Activated B cell treated with CpG ODN at 0.5 μM for 24 hours (primary cell): ENCODE measurements at regions of chr19 and their contacts with region 1.

Region 1: GRCh38 chr19:9621156-9622037 is at the start of gene ZNF561:
- DNase-seq: peak; percentile 81
- ATAC-seq: peak; percentile 88
- H3K4me3 Mint-ChIP-seq: peak within 1 kb of the TSS; percentile 96
- H3K27ac Mint-ChIP-seq: peak within 1 kb of the TSS; percentile 98
- H3K4me1 Mint-ChIP-seq: peaks cover 20% of the 10 kb centered on the region
- H3K27me3 Mint-ChIP-seq: peaks cover 3% of the 10 kb centered on the region
- CTCF ChIP-seq: no peak
- total RNA-seq, gene ZNF561: 37.1 and 40.2 TPM in 2 replicates

Region 2: GRCh38 chr19:8846819-8847218 is 774.6 kb before region 1 on chr19:
- CTCF ChIA-PET with region 1: no interaction called
- POLR2A ChIA-PET with region 1: no interaction called
- intact Hi-C with region 1: no loop called
- DNase-seq: no peak
- ATAC-seq: no peak
- H3K4me3 Mint-ChIP-seq: no peak overlapping the region
- H3K27ac Mint-ChIP-seq: no peak overlapping the region
- H3K4me1 Mint-ChIP-seq: no peaks in the 10 kb centered on the region
- H3K27me3 Mint-ChIP-seq: peaks cover 7% of the 10 kb centered on the region
- CTCF ChIP-seq: no peak

Region 3: GRCh38 chr19:9309139-9309973 is 312.0 kb before region 1 on chr19 and contains the start of gene ZNF699:
- CTCF ChIA-PET with region 1: no interaction called
- POLR2A ChIA-PET with region 1: no interaction called
- intact Hi-C with region 1: loop called (anchors 1 kb)
- DNase-seq: peak; percentile 94
- ATAC-seq: peak; percentile 88
- H3K4me3 Mint-ChIP-seq: peak within 1 kb of the TSS; percentile 96
- H3K27ac Mint-ChIP-seq: peak within 1 kb of the TSS; percentile 98
- H3K4me1 Mint-ChIP-seq: peaks cover 24% of the 10 kb centered on the region
- H3K27me3 Mint-ChIP-seq: no peaks in the 10 kb centered on the region
- CTCF ChIP-seq: no peak
- total RNA-seq, gene ZNF699: 10.3 and 11.7 TPM in 2 replicates

Region 4: DNA sequence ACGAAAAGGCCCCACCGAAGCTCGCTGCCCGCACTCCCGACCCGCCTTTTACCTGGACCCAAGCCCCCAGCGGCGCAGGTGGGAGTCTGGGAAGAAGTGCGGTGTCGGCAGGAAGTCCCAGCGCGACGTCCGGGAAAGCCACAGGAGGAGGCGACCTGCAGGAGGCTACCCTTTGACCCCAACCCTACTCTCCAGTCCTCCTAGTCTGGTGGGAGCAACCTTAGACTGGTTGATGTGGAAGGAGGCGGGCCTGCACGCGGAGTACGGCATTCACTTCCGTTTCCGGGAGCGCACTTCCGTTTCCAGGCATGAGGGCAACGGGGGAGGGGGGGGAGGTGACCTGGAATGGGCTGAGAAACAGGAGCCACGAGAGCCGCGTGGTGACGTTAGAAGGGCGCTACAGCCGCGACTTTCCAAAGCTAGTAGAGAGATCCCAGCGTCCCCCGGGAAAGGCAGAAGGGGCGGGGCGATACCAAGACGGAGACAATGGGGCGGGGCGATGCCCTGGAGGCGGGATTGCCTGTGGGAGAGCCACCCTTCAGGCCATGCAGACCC is 214.5 kb before region 1 on chr19:
- CTCF ChIA-PET with region 1: no interaction called
- POLR2A ChIA-PET with region 1: no interaction called
- intact Hi-C with region 1: no loop called
- DNase-seq: peak; percentile 35
- ATAC-seq: peak; percentile 73
- H3K4me3 Mint-ChIP-seq: peak overlapping the region; percentile 88
- H3K27ac Mint-ChIP-seq: peak overlapping the region; percentile 30
- H3K4me1 Mint-ChIP-seq: peaks cover 19% of the 10 kb centered on the region
- H3K27me3 Mint-ChIP-seq: no peaks in the 10 kb centered on the region
- CTCF ChIP-seq: no peak

Region 5: GRCh38 chr19:9584073-9584833 is 37.1 kb before region 1 on chr19 and contains the start of gene ZNF121:
- CTCF ChIA-PET with region 1: interaction called, 4 read pairs
- POLR2A ChIA-PET with region 1: no interaction called
- intact Hi-C with region 1: loop called (anchors 1 kb)
- DNase-seq: peak; percentile 80
- ATAC-seq: peak; percentile 84
- H3K4me3 Mint-ChIP-seq: peak within 1 kb of the TSS; percentile 95
- H3K27ac Mint-ChIP-seq: peak within 1 kb of the TSS; percentile 94
- H3K4me1 Mint-ChIP-seq: peaks cover 46% of the 10 kb centered on the region
- H3K27me3 Mint-ChIP-seq: peaks cover 6% of the 10 kb centered on the region
- CTCF ChIP-seq: no peak
- total RNA-seq, gene ZNF121: 53.7 and 57.0 TPM in 2 replicates

Region 6: GRCh38 chr19:9768175-9769112 is 147.0 kb after region 1 on chr19 and contains the start of gene ZNF846:
- CTCF ChIA-PET with region 1: interaction called, 4 read pairs
- POLR2A ChIA-PET with region 1: interaction called, 10 read pairs
- intact Hi-C with region 1: loop called (anchors 1 kb)
- DNase-seq: peak; percentile 91
- ATAC-seq: peak; percentile 98
- H3K4me3 Mint-ChIP-seq: peak within 1 kb of the TSS; percentile 90
- H3K27ac Mint-ChIP-seq: peak within 1 kb of the TSS; percentile 94
- H3K4me1 Mint-ChIP-seq: peaks cover 9% of the 10 kb centered on the region
- H3K27me3 Mint-ChIP-seq: no peaks in the 10 kb centered on the region
- CTCF ChIP-seq: no peak
- total RNA-seq, gene ZNF846: 7.9 and 10.7 TPM in 2 replicates

Region 7: DNA sequence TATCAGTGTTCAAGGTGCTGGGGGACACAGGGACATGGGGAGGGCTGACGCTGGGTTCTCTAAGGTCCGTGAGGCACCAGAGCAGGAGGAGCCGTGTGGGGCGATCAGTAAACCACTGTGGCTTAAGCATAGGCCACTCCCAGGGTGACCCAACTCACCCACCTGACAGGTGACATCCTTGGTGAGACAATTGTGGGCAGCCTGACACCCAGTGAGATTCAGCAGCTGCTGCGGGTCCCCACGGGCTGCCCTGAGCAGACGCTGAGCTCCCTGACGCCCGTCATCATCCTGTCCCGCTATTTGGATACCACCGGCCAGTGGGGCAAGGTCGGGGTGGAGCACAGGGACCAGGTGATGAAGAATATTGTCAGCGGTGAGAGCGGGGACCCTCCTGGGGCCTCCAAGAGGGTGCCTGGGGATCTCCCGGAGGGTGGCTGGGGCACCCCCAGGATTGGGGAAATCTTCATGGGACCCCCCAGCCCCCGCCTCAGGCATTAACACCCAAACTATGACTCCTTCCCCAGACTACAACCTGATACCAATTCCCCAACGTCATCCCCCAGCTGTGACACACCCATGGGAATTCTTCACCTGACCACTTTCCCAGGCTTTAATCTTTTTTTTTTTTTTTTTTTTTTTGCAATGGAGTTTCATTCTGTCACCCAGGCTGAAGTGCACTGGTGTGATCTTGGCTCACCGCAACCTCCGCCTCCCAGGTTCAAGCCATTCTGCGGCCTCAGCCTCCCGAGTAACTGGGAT is 431.4 kb after region 1 on chr19:
- CTCF ChIA-PET with region 1: no interaction called
- POLR2A ChIA-PET with region 1: no interaction called
- intact Hi-C with region 1: no loop called
- DNase-seq: no peak
- ATAC-seq: no peak
- H3K4me3 Mint-ChIP-seq: no peak overlapping the region
- H3K27ac Mint-ChIP-seq: no peak overlapping the region
- H3K4me1 Mint-ChIP-seq: no peaks in the 10 kb centered on the region
- H3K27me3 Mint-ChIP-seq: peaks cover 3% of the 10 kb centered on the region
- CTCF ChIP-seq: no peak